Naive thymus-derived CD4-positive, alpha-beta T cell (primary cell): ENCODE measurements at regions of chr19 and their contacts with region 1.

Region 1: DNA sequence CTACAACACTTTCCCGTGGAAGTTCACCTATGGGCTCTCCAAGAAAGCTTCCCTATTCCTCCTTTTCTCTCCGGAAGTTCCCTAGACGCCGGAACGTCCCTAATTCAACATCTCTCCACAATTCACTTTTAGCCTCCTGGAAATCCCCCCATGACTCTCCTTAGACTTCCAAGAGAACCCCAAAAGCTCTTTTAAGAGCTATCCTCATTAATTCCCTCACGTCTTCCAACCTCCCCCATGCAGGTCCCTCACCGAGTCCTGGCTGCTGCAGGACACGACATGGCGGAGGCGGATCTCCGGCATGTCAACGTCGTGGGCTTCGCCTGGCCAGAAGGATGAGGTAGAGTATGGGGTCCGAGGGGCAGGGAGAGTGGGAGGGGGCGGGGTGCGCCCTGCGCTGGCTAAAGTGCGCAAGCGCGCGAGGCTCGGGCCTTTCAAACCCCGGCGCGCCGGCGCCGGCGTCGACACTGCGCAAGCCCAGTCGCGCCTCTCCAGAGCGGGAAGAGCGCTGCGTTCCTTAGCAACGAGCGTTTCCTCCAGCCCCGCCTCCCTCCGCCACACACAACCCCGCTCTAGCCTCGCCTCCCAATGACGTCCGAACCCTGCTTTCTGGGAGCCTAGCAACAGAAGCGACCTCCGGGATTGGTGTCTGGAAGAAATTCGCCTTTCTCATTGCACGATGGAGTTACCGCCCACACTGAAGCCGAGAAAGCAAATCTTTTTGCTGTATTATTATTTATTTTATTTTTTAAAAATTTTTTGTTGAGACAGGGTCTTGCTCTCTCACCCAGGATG is at the starts of genes PINLYP and XRCC1:
- DNase-seq: peak; percentile 85 to 99 (median 95)
- ATAC-seq: peak; percentile 99
- H3K4me3 ChIP-seq: peak within 1 kb of the TSS; percentile 77
- H3K4me3 Mint-ChIP-seq: peak within 1 kb of the TSS; percentile 92 to 98 (median 96)
- H3K27ac ChIP-seq: peak within 1 kb of the TSS; percentile 98
- H3K27ac Mint-ChIP-seq: peak within 1 kb of the TSS; percentile 93 to 99 (median 96)
- H3K4me1 ChIP-seq: peaks cover 12 to 14% of the 10 kb centered on the region in 2 donors
- H3K4me1 Mint-ChIP-seq: peaks cover 26 to 63% (median 51%) of the 10 kb centered on the region in 7 donors
- H3K27me3 ChIP-seq: no peaks in the 10 kb centered on the region
- H3K27me3 Mint-ChIP-seq: peaks cover 0 to 5% (median 0%) of the 10 kb centered on the region in 5 donors
- total RNA-seq, gene PINLYP: 0.27 to 5.8 (median 0.59) TPM
- total RNA-seq, gene XRCC1: 32.0 to 36.1 (median 35.4) TPM

Region 2: GRCh38 chr19:43532962-43533545 is 42.3 kb before region 1 on chr19 and contains the start of gene ZNF575:
- CTCF ChIA-PET with region 1: no interaction called
- POLR2A ChIA-PET with region 1: interaction called, 6 read pairs
- intact Hi-C with region 1: loop called (anchors 1 kb)
- DNase-seq: peak; percentile 61 to 91 (median 87)
- ATAC-seq: peak; percentile 64
- H3K4me3 ChIP-seq: peak within 1 kb of the TSS; percentile 98
- H3K4me3 Mint-ChIP-seq: peak within 1 kb of the TSS; percentile 88 to 98 (median 95)
- H3K27ac ChIP-seq: peak within 1 kb of the TSS; percentile 68
- H3K27ac Mint-ChIP-seq: peak within 1 kb of the TSS; percentile 90 to 98 (median 95)
- H3K4me1 ChIP-seq: peaks cover 12 to 14% of the 10 kb centered on the region in 2 donors
- H3K4me1 Mint-ChIP-seq: peaks cover 5 to 27% (median 18%) of the 10 kb centered on the region in 7 donors
- H3K27me3 ChIP-seq: no peaks in the 10 kb centered on the region
- H3K27me3 Mint-ChIP-seq: no peaks in the 10 kb centered on the region
- total RNA-seq, gene ZNF575: 4.5 to 10.7 (median 5.6) TPM

Region 3: GRCh38 chr19:43555185-43555770 is 20.1 kb before region 1 on chr19:
- CTCF ChIA-PET with region 1: interaction called, 11 read pairs
- POLR2A ChIA-PET with region 1: interaction called, 9 read pairs
- intact Hi-C with region 1: loop called (anchors 1 kb)
- DNase-seq: peak; percentile 59 to 90 (median 84)
- ATAC-seq: peak; percentile 98
- H3K4me3 ChIP-seq: no peak overlapping the region
- H3K4me3 Mint-ChIP-seq: no peak overlapping the region
- H3K27ac ChIP-seq: peak overlapping the region; percentile 1
- H3K27ac Mint-ChIP-seq: peak overlapping the region; percentile 44 to 89 (median 58)
- H3K4me1 ChIP-seq: peaks cover 3 to 10% of the 10 kb centered on the region in 2 donors
- H3K4me1 Mint-ChIP-seq: peaks cover 11 to 32% (median 23%) of the 10 kb centered on the region in 7 donors
- H3K27me3 ChIP-seq: no peaks in the 10 kb centered on the region
- H3K27me3 Mint-ChIP-seq: no peaks in the 10 kb centered on the region

Region 4: GRCh38 chr19:43562698-43563241 is 12.6 kb before region 1 on chr19:
- CTCF ChIA-PET with region 1: interaction called, 3 read pairs
- POLR2A ChIA-PET with region 1: interaction called, 12 read pairs
- intact Hi-C with region 1: loop called (anchors 1 kb)
- DNase-seq: peak; percentile 43 to 83 (median 75)
- ATAC-seq: peak; percentile 91
- H3K4me3 ChIP-seq: peak overlapping the region; percentile 32
- H3K4me3 Mint-ChIP-seq: peak overlapping the region; percentile 63 to 97 (median 87)
- H3K27ac ChIP-seq: peak overlapping the region; percentile 79
- H3K27ac Mint-ChIP-seq: peak overlapping the region; percentile 75 to 99 (median 96)
- H3K4me1 ChIP-seq: peaks cover 31 to 40% of the 10 kb centered on the region in 2 donors
- H3K4me1 Mint-ChIP-seq: peaks cover 33 to 65% (median 63%) of the 10 kb centered on the region in 7 donors
- H3K27me3 ChIP-seq: no peaks in the 10 kb centered on the region
- H3K27me3 Mint-ChIP-seq: no peaks in the 10 kb centered on the region

Region 5: DNA sequence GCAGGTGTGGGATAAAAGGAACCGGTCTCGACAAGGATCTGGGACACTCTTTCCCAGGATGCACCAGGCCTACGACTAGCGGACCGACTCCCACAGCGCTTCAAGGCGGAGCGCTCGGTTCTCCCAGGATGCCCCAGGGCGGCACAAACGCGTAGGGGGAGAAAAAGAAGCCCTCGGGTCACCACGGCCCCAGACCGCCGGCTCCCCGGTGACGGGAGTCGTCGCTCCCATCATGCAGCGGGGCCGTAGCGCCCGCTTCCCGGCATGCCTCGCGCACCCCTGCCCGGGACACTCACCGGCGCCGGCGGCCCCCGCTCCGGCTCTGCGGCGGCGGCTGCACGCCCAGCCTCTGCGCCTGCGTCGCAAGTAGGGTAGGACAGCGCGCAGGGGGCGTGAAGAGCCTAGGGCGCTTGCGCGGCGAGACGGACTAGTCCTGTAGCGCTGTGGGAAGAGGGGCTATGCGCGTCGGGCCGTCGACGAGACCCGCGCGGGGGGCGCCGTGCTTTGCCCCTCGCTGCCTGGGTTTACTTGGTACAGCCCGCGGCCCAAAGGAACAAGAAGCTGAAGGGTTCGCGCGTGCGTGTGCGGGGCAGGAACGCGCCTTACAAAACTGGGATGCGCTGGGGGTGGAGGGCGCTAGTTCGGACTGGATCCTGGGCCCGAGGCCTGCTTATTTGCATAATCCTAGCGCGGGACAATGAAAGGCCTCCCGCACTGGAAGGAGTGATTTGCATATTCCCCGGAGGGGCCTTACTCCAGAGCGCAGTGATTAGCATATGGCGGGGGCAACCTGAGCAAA is 44.1 kb after region 1 on chr19 and contains the start of gene ZNF428:
- CTCF ChIA-PET with region 1: no interaction called
- POLR2A ChIA-PET with region 1: no interaction called
- intact Hi-C with region 1: loop called (anchors 1 kb)
- DNase-seq: peak; percentile 77 to 91 (median 84)
- ATAC-seq: peak; percentile 93
- H3K4me3 ChIP-seq: peak within 1 kb of the TSS; percentile 63
- H3K4me3 Mint-ChIP-seq: peak within 1 kb of the TSS; percentile 95 to 99 (median 98)
- H3K27ac ChIP-seq: peak within 1 kb of the TSS; percentile 83
- H3K27ac Mint-ChIP-seq: peak within 1 kb of the TSS; percentile 93 to 99 (median 97)
- H3K4me1 ChIP-seq: peaks cover 9 to 12% of the 10 kb centered on the region in 2 donors
- H3K4me1 Mint-ChIP-seq: peaks cover 18 to 59% (median 36%) of the 10 kb centered on the region in 7 donors
- H3K27me3 ChIP-seq: no peaks in the 10 kb centered on the region
- H3K27me3 Mint-ChIP-seq: no peaks in the 10 kb centered on the region
- total RNA-seq, gene ZNF428: 21.7 to 29.1 (median 25.9) TPM

Region 6: DNA sequence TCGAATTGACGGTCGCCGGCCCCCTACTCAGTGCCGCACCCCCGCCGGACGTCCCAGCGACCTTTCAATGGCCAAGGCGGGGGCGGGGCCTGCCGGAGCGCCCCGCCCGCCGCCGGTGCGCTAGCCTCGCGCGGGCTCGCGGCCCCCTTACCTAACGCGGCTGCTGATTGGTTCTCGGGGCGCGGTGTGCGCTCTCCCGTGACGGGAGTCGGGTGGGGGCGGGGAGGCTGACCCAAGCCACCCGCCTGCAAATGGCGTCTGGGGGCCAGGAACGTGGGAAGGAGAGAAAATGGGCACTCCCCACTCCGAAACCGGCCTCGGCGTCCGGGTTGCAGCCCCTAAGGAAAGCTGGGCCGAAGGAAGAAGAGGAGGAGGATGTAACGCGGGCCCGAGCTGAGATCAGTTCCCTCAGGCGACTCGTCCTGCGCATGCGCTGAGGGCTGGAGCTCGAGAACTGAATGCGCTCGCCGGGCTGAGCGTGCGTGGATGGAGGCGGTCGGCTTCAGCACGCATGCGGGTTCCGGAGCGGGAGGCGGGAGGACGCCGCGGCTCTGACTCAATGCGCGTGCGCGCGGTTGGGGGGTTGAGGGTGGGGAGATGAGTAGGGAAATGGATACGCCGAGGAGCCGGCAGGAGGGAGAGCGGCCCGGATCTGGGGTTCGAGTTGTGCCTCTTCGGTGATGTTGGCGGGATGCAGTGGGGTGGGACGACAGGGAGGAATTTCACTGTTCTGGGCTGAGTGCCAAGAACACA is 179.3 kb after region 1 on chr19 and contains the start of gene SMG9:
- CTCF ChIA-PET with region 1: no interaction called
- POLR2A ChIA-PET with region 1: interaction called, 3 read pairs
- intact Hi-C with region 1: loop called in 1 of 2 experiments (anchors 1 kb)
- DNase-seq: peak; percentile 98 to 100 (median 99)
- ATAC-seq: peak; percentile 92
- H3K4me3 ChIP-seq: peak within 1 kb of the TSS; percentile 95
- H3K4me3 Mint-ChIP-seq: peak within 1 kb of the TSS; percentile 94 to 99 (median 97)
- H3K27ac ChIP-seq: peak within 1 kb of the TSS; percentile 85
- H3K27ac Mint-ChIP-seq: peak within 1 kb of the TSS; percentile 96 to 100 (median 98)
- H3K4me1 ChIP-seq: peaks cover 20 to 27% of the 10 kb centered on the region in 2 donors
- H3K4me1 Mint-ChIP-seq: peaks cover 5 to 62% (median 45%) of the 10 kb centered on the region in 7 donors
- H3K27me3 ChIP-seq: no peaks in the 10 kb centered on the region
- H3K27me3 Mint-ChIP-seq: peaks cover 0 to 6% (median 0%) of the 10 kb centered on the region in 5 donors
- total RNA-seq, gene SMG9: 48.5 to 75.9 (median 53.9) TPM